GM12878 (cell line): ENCODE measurements at regions of chr20 and their contacts with region 1.

Region 1: GRCh38 chr20:8299921-8300320 is 167.9 kb downstream of the PLCB1 start:
- DNase-seq: no peak
- ATAC-seq: no peak
- H3K4me3 ChIP-seq: no peak overlapping the region
- H3K27ac ChIP-seq: no peak overlapping the region
- H3K4me1 ChIP-seq: no peaks in the 10 kb centered on the region
- H3K27me3 ChIP-seq: no peaks in the 10 kb centered on the region
- CTCF ChIP-seq: no peak
- EP300 ChIP-seq: no peak
- POLR2A ChIP-seq: no peak
- RAD21 ChIP-seq: no peak

Region 2: DNA sequence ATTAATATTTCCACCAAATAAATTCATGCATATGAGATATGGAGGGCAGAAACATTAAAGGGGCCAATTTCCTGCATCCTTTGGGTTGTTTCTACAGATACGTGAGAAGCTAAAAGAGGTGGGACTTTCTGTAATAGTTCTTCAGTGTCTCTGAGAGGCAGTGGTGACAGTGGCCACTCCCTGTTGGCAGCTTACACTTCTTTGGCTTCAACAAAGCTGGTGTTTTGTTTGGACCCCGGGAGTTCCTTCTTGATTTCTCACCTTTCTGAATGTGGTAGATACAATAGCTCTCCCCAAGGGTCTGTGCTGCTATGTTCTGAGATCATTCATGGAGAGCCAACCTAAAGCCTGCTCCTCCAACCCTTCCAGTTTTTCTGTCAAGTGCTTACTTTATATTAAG is 160.0 kb before region 1 on chr20:
- CTCF ChIA-PET with region 1: no interaction called
- POLR2A ChIA-PET with region 1: no interaction called
- RAD21 ChIA-PET with region 1: no interaction called
- SMC1A ChIA-PET with region 1: no interaction called
- in situ Hi-C with region 1: loop called (anchors 5 kb)
- intact Hi-C with region 1: no loop called
- DNase-seq: no peak
- ATAC-seq: no peak
- H3K4me3 ChIP-seq: no peak overlapping the region
- H3K27ac ChIP-seq: no peak overlapping the region
- H3K4me1 ChIP-seq: no peaks in the 10 kb centered on the region
- H3K27me3 ChIP-seq: peaks cover 0 to 2% of the 10 kb centered on the region in 2 experiments; a peak in 2 of 4 replicates
- CTCF ChIP-seq: no peak
- EP300 ChIP-seq: no peak
- POLR2A ChIP-seq: no peak
- RAD21 ChIP-seq: no peak